GM12878 (cell line): ENCODE measurements at regions of chr14 and their contacts with region 1.

Region 1: GRCh38 chr14:64026600-64026999 is 173.8 kb downstream of the SYNE2 start:
- DNase-seq: no peak
- ATAC-seq: 0 out of 3 replicates have a peak, but pooled peaks have one; percentile 24
- H3K4me3 ChIP-seq: no peak overlapping the region
- H3K27ac ChIP-seq: no peak overlapping the region
- H3K4me1 ChIP-seq: no peaks in the 10 kb centered on the region
- H3K27me3 ChIP-seq: no peaks in the 10 kb centered on the region
- CTCF ChIP-seq: peak in 1 of 3 experiments; percentile 16; a peak in 1 of 6 replicates
- EP300 ChIP-seq: no peak
- POLR2A ChIP-seq: no peak
- RAD21 ChIP-seq: no peak

Region 2: GRCh38 chr14:63972323-63972932 is 54.2 kb before region 1 on chr14:
- CTCF ChIA-PET with region 1: no interaction called
- POLR2A ChIA-PET with region 1: no interaction called
- RAD21 ChIA-PET with region 1: no interaction called
- SMC1A ChIA-PET with region 1: no interaction called
- in situ Hi-C with region 1: no loop called
- intact Hi-C with region 1: no loop called
- DNase-seq: no peak
- ATAC-seq: peak; percentile 70
- H3K4me3 ChIP-seq: peak overlapping the region; percentile 31; the same call in 1 of the 2 replicates
- H3K27ac ChIP-seq: peak overlapping the region; percentile 80
- H3K4me1 ChIP-seq: peaks cover 16% of the 10 kb centered on the region
- H3K27me3 ChIP-seq: no peaks in the 10 kb centered on the region
- CTCF ChIP-seq: no peak
- EP300 ChIP-seq: no peak
- POLR2A ChIP-seq: no peak
- RAD21 ChIP-seq: no peak

Region 3: GRCh38 chr14:64012720-64013119 is 13.9 kb before region 1 on chr14:
- CTCF ChIA-PET with region 1: interaction called, 15 read pairs
- POLR2A ChIA-PET with region 1: interaction called, 3 read pairs
- RAD21 ChIA-PET with region 1: no interaction called
- SMC1A ChIA-PET with region 1: interaction called, 12 read pairs
- in situ Hi-C with region 1: no loop called
- intact Hi-C with region 1: no loop called
- DNase-seq: no peak
- ATAC-seq: no peak
- H3K4me3 ChIP-seq: no peak overlapping the region
- H3K27ac ChIP-seq: no peak overlapping the region
- H3K4me1 ChIP-seq: no peaks in the 10 kb centered on the region
- H3K27me3 ChIP-seq: no peaks in the 10 kb centered on the region
- CTCF ChIP-seq: no peak
- EP300 ChIP-seq: no peak
- POLR2A ChIP-seq: no peak
- RAD21 ChIP-seq: no peak